ENCODE measurements at regions of chr5 and their contacts with region 1.

Region 1: DNA sequence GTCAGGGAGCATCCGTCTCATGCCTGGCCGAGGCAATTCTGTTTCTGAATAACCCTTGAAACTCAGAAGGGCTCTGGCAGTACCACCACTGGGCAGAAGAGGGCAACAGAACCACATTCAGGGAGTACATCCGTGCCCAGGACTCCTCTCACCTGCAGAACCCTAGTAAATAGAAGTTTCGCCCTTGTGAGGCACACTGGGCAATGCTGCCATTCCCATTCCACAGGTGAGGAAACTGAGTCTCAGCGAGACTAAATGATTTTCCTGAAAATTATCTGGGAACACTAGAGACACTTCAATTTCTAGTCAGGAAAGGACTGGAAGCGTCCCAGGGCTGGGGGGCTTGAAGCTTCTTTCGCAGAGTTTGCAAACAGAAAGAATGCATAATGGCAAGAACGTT is 74.7 kb downstream of the FGF1 start:
- DNase-seq: peak; percentile 62 to 69
- ATAC-seq: peak; percentile 71 to 88 (median 82)
- H3K4me3 ChIP-seq: no peak overlapping the region
- H3K27ac ChIP-seq: no peak overlapping the region
- H3K4me1 ChIP-seq: no peaks in the 10 kb centered on the region
- H3K27me3 ChIP-seq: no peaks in the 10 kb centered on the region
- CTCF ChIP-seq: peak; percentile 84

Region 2: DNA sequence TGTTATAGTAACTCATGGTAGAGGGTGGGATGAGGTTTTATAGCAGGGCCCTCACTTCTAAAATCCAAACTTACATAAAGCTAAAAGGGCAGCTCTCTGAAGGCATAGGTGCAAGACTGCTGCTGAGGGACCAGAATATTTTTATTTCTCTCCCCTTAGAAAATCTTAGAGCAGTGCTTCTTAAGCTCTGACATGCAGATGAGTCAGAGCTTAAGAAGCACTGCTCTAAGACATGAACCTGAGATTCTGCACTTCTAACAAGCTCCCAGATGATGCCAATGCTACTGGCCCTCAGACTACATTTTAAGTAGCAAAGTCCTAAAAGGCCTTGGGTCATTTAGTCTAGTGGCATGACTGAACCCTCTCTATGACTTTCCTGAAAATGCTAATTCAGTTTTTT is 188.7 kb before region 1 on chr5:
- intact Hi-C with region 1: no loop called
- DNase-seq: no peak
- ATAC-seq: no peak
- H3K4me3 ChIP-seq: no peak overlapping the region
- H3K27ac ChIP-seq: no peak overlapping the region
- H3K4me1 ChIP-seq: no peaks in the 10 kb centered on the region
- H3K27me3 ChIP-seq: no peaks in the 10 kb centered on the region
- CTCF ChIP-seq: no peak

Region 3: DNA sequence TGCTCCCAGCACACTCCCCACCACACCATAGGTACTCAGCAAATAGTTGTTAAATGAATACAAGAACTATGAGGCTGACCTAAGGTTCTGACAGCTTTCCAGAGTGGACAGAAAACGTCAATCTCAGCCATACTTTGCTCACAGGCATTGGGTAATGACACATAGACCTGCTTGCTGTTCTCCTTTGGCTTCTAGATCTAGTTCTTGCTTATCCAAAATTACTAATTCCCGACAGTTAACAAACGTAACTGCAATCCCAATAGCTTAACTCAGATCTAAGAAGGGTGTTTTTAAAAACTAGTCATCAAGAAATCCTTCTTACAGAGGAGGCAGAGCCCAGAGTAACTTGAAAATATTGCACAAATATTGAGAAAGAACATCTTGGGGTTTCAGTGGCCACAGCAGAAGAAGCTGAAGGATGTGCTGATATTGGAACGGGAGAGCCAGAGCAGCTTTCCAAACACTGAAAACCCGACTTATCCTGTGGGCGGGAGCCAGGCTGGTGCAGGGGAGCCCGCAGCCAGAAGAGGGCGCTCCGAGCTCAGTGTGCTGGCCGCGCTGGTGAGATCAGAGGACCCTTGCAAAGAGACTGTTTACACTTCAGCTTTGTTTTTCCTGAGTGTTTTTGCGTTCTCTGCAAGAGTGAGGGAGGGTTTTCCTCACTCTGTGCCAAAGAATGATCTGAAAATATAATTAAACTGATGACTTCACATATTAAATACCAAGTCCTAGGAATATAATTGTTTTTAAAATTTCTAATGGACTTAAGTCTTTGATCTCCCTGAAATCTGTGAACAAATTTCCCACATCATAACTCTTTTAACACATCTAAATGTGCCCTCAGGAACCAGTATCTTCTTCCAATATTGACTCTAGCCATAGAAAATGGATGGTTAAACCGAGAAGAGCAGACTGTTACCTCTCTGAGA is 44.4 kb after region 1 on chr5:
- intact Hi-C with region 1: loop called in 1 of 2 experiments (anchors 5 kb)
- DNase-seq: peak; percentile 84 to 91
- ATAC-seq: peak; percentile 91 to 98 (median 95)
- H3K4me3 ChIP-seq: no peak overlapping the region
- H3K27ac ChIP-seq: no peak overlapping the region
- H3K4me1 ChIP-seq: peaks cover 7% of the 10 kb centered on the region
- H3K27me3 ChIP-seq: no peaks in the 10 kb centered on the region
- CTCF ChIP-seq: peak; percentile 99

Region 4: GRCh38 chr5:142699184-142699720 is 88.1 kb after region 1 on chr5:
- intact Hi-C with region 1: loop called (anchors 2 to 5 kb)
- DNase-seq: peak; percentile 85 to 92
- ATAC-seq: peak; percentile 86 to 91 (median 90)
- H3K4me3 ChIP-seq: no peak overlapping the region
- H3K27ac ChIP-seq: peak overlapping the region; percentile 80
- H3K4me1 ChIP-seq: peaks cover 25% of the 10 kb centered on the region
- H3K27me3 ChIP-seq: no peaks in the 10 kb centered on the region
- CTCF ChIP-seq: peak; percentile 99

Region 5: GRCh38 chr5:142860270-142860669 is 249.1 kb after region 1 on chr5:
- intact Hi-C with region 1: no loop called
- DNase-seq: no peak
- ATAC-seq: peak; percentile 46 to 65 (median 53)
- H3K4me3 ChIP-seq: no peak overlapping the region
- H3K27ac ChIP-seq: no peak overlapping the region
- H3K4me1 ChIP-seq: peaks cover 14% of the 10 kb centered on the region
- H3K27me3 ChIP-seq: no peaks in the 10 kb centered on the region
- CTCF ChIP-seq: no peak

Region 6: DNA sequence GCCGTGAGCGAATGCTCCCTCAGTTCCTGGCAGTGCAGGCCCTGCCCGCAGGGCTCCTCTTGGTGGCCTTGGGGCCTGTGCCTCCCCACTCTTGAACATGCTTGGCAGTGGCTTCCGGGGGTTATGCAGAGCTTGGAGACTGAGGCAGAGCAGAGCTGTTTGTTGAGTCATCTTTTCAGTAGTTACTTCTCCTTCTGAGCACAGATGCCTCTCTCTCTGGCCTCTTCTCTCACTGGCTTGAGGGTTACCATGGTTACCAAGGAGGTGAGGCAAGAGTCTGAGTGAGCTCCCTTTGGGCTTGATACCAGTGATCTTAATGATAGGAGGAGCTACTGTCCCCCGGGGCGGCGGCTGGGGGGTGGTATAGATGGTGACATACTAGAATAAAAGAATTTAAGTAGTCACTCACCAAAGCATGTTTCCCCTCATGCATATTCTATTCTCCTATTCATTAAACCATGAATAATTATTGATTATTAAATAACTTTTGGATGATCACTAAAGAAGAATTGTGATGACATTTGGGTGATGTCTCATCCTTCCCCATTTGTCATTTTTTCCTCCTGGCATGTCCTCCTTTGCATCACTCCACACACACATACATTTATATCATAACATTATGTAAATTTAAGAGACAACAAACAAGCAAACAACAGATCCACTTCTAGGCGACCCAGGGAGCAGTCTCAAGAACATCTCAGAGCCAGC is 270.1 kb after region 1 on chr5:
- intact Hi-C with region 1: loop called (anchors 5 kb)
- DNase-seq: no peak
- ATAC-seq: peak in 1 of 4 donors; percentile 44
- H3K4me3 ChIP-seq: no peak overlapping the region
- H3K27ac ChIP-seq: no peak overlapping the region
- H3K4me1 ChIP-seq: peaks cover 8% of the 10 kb centered on the region
- H3K27me3 ChIP-seq: no peaks in the 10 kb centered on the region
- CTCF ChIP-seq: no peak

Region 7: DNA sequence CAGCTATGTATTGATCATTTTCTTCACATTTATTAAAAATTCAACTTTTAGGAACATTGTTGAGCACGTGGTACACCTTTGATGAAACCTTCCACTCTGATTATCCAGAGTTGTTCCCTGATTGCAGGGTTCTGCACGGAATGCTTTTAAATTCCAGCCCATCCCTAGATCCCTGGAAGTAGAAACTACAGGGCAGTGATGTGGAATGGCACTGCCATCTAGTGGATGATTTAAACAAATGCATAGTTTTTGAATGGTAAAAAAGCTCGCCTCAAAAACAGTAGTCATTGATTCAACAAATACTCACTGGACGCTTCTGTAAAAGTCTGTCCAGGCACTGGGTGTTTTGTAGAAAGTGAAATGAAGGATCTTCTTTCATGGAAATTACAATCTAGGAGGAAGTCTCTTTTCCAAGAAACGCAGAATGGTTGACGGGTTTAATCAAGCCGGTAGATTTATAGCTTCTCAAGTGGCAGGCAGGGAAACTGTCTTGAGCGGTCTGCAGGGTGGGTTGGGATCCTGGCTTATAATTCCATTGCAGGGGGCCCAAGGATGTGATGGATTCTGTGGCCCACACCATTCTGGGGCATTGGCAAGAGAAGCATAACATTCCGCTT is 277.4 kb after region 1 on chr5:
- intact Hi-C with region 1: loop called (anchors 5 kb)
- DNase-seq: no peak
- ATAC-seq: peak; percentile 72 to 87 (median 78)
- H3K4me3 ChIP-seq: no peak overlapping the region
- H3K27ac ChIP-seq: no peak overlapping the region
- H3K4me1 ChIP-seq: no peaks in the 10 kb centered on the region
- H3K27me3 ChIP-seq: no peaks in the 10 kb centered on the region
- CTCF ChIP-seq: peak; percentile 85

Measured in psoas muscle (tissue), 8 donors.